ENCODE measurements at regions of chr18 and their contacts with region 1.

Region 1: GRCh38 chr18:8704361-8705279 is 736 bp upstream of the MTCL1 start:
- H3K4me3 Mint-ChIP-seq: peak overlapping the region; percentile 92
- H3K27ac Mint-ChIP-seq: peak overlapping the region; percentile 91
- H3K4me1 Mint-ChIP-seq: peaks cover 70% of the 10 kb centered on the region
- H3K27me3 Mint-ChIP-seq: peaks cover 51% of the 10 kb centered on the region

Region 2: GRCh38 chr18:8608795-8609658 is 95.6 kb before region 1 on chr18 and contains the start of gene RAB12:
- intact Hi-C with region 1: loop called (anchors 10 kb)
- H3K4me3 Mint-ChIP-seq: peak within 1 kb of the TSS; percentile 84
- H3K27ac Mint-ChIP-seq: peak within 1 kb of the TSS; percentile 87
- H3K4me1 Mint-ChIP-seq: peaks cover 39% of the 10 kb centered on the region
- H3K27me3 Mint-ChIP-seq: peaks cover 8% of the 10 kb centered on the region

Region 3: DNA sequence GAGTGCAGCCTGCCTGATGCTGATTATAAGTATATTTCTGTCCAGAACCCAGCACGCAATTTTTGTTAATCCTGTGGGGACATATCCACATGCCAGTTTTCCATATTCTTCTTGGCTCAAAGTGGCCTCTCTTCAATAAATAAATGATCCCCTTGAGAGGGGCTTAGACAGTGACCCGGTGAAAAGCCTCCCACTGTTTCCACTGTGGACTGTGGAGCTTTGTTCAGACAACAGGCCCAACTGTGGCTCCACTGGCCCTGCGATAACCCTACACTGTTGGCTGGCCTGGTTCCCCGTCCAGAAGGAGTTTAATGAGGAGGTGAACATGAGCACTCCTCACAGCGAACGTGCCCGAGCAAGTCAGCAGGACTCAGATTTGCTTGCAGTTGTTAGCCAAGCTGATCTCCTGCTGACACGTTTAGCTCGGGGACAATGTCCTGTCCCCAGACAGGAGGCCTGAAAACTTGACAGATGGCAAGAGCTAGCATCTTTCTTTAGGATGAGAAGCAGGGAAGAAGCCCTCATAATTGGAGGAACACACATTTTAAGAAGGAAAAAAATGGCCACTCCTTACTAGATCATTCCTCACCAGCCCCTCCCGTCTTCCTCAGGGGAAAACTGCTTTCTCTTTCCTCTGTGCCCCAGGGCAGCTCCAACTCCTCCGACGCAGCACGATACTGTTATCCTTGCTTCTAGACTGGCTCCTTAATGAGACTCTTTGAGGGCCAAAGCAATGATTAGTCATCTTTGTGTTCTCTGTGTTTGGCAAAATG is 19.3 kb before region 1 on chr18:
- intact Hi-C with region 1: no loop called
- H3K4me3 Mint-ChIP-seq: no peak overlapping the region
- H3K27ac Mint-ChIP-seq: no peak overlapping the region
- H3K4me1 Mint-ChIP-seq: no peaks in the 10 kb centered on the region
- H3K27me3 Mint-ChIP-seq: peaks cover 7% of the 10 kb centered on the region

Region 4: GRCh38 chr18:9066817-9067306 is 362.2 kb after region 1 on chr18:
- intact Hi-C with region 1: loop called (anchors 5 kb)
- H3K4me3 Mint-ChIP-seq: no peak overlapping the region
- H3K27ac Mint-ChIP-seq: peak overlapping the region; percentile 2
- H3K4me1 Mint-ChIP-seq: peaks cover 70% of the 10 kb centered on the region
- H3K27me3 Mint-ChIP-seq: no peaks in the 10 kb centered on the region